B cell (primary cell): ENCODE measurements at regions of chr19 and their contacts with region 1.

Region 1: DNA sequence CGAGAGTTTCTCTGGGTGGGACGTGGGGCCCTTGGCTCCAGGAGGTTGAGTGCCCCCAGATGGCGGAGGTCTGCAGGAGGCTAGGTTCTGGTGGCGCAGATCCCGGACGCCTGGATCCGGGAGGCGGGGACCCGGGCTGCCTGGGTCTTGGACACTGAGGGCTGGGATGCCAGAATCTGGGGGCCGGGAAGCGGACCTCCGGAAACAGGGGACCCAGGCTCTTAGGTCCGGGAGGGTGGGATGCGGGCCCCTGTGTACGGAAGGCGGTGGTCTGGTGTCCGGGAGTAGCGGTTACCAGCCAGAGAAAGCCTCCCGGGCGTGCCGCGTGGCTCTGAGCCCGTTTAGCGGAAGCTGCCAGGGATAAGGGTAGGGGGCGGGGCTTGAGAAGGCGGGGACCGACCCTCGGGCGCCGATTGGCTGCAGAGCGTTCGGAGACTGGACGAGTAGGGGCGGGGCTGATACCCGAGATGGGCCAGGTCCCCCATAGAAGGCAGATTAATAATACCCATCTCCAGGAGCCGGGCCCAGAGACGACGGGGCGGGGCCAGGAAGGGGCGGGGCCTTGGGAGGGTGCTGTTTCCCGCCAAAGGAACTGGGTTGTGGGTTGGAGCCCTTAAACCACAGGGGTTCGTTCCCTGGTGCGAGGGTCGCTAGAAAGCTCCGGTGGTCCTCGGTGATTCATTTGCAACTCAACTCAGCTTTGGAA is at the start of gene SLC1A5:
- DNase-seq: peak; percentile 97
- ATAC-seq: peak; percentile 86
- H3K4me3 ChIP-seq: peak within 1 kb of the TSS; percentile 67 to 95 (median 79)
- H3K4me3 Mint-ChIP-seq: peak within 1 kb of the TSS; percentile 93
- H3K27ac ChIP-seq: peak within 1 kb of the TSS; percentile 40 to 47
- H3K27ac Mint-ChIP-seq: peak within 1 kb of the TSS; percentile 98
- H3K4me1 ChIP-seq: peaks cover 32 to 51% of the 10 kb centered on the region in 2 donors
- H3K4me1 Mint-ChIP-seq: peaks cover 52% of the 10 kb centered on the region
- H3K27me3 ChIP-seq: no peaks in the 10 kb centered on the region
- H3K27me3 Mint-ChIP-seq: no peaks in the 10 kb centered on the region
- CTCF ChIP-seq: no peak
- total RNA-seq, gene SLC1A5: 35.2 and 37.3 TPM in 2 replicates

Region 2: DNA sequence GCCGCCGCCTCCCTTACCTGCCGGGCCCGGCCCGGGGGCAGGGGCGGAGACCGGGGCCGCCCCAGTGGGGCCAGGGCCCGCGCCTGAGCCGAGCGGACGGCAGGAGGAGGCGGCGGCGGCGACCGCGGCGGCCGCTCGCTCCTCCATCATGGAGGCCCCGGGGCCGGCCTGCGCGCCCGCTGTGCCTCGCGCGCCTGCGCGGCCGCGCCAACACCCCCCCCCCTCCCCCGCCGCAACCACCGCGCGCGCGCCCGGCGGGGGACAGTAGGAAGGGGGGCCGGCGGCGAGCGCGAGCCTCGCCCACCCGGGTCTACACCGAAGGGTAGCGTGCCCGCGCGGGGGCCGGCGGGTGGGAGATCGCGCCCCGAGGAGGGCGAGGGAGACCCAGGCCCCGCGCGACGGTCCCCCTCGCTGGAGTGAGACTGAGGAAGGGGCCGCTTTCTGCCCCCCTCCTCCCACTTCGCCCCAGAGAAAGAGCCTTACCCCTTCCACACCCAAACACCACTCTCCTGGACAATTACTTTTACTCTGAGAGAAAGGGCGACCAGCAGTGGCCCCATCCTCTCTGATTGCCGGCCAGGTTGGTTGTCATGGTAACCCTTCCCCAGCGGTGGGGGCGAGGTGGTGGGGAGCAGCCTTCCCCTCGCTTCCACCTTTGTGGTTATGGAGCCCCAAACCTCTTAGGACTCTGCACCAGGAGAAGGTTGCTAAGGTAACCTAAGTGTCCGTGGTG is 42.0 kb before region 1 on chr19 and contains the start of gene STRN4:
- CTCF ChIA-PET with region 1: interaction called, 4 read pairs
- POLR2A ChIA-PET with region 1: no interaction called
- intact Hi-C with region 1: loop called (anchors 5 kb)
- DNase-seq: peak; percentile 82
- ATAC-seq: peak; percentile 78
- H3K4me3 ChIP-seq: peak within 1 kb of the TSS; percentile 51 to 87 (median 84)
- H3K4me3 Mint-ChIP-seq: peak within 1 kb of the TSS; percentile 93
- H3K27ac ChIP-seq: peak within 1 kb of the TSS; percentile 43 to 77
- H3K27ac Mint-ChIP-seq: peak within 1 kb of the TSS; percentile 85
- H3K4me1 ChIP-seq: peaks cover 15 to 43% of the 10 kb centered on the region in 2 donors
- H3K4me1 Mint-ChIP-seq: peaks cover 58% of the 10 kb centered on the region
- H3K27me3 ChIP-seq: no peaks in the 10 kb centered on the region
- H3K27me3 Mint-ChIP-seq: no peaks in the 10 kb centered on the region
- CTCF ChIP-seq: no peak
- total RNA-seq, gene STRN4: 102 and 112 TPM in 2 replicates

Region 3: DNA sequence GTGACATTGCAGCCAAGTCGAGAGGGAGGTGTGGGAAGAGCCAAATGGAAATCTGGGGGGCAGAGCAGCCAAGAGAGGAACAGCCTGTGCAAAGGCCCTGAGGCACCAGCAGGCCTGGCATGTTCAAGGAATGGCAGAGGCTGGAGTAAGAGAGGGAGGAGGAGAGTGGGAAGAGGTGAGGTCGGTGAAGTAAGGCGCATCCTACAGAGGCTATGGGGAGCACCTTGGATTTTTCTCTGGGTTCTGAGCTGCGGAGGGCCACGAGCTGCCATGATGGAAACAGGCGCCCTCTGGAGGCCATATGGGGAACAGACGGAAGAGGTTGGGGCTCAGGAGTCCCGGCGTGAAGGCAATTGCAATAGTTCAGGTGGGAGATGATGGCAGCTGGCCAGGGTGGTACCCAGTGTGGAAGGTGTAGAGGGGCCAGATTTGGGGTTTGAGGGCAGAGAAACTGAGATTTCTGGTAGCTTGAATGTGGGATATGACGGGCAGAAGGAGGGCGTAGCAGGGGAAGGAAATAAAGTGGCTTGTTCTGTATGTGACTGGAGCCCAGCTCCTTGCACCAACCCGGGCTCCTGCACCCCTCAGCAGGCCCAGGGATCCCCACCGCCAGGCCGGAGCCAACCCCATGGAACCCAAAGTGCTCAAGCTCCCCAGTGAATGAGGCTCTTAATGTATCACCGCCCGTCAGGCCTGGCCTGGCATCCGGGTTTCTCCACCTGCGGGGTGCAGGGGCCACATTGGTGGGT is 21.7 kb before region 1 on chr19:
- CTCF ChIA-PET with region 1: interaction called, 10 read pairs
- POLR2A ChIA-PET with region 1: interaction called, 12 read pairs
- intact Hi-C with region 1: no loop called
- DNase-seq: peak; percentile 67
- ATAC-seq: peak; percentile 64
- H3K4me3 ChIP-seq: no peak overlapping the region
- H3K4me3 Mint-ChIP-seq: no peak overlapping the region
- H3K27ac ChIP-seq: no peak overlapping the region
- H3K27ac Mint-ChIP-seq: no peak overlapping the region
- H3K4me1 ChIP-seq: no peaks in the 10 kb centered on the region
- H3K4me1 Mint-ChIP-seq: peaks cover 2% of the 10 kb centered on the region
- H3K27me3 ChIP-seq: no peaks in the 10 kb centered on the region
- H3K27me3 Mint-ChIP-seq: no peaks in the 10 kb centered on the region
- CTCF ChIP-seq: peak; percentile 72

Region 4: DNA sequence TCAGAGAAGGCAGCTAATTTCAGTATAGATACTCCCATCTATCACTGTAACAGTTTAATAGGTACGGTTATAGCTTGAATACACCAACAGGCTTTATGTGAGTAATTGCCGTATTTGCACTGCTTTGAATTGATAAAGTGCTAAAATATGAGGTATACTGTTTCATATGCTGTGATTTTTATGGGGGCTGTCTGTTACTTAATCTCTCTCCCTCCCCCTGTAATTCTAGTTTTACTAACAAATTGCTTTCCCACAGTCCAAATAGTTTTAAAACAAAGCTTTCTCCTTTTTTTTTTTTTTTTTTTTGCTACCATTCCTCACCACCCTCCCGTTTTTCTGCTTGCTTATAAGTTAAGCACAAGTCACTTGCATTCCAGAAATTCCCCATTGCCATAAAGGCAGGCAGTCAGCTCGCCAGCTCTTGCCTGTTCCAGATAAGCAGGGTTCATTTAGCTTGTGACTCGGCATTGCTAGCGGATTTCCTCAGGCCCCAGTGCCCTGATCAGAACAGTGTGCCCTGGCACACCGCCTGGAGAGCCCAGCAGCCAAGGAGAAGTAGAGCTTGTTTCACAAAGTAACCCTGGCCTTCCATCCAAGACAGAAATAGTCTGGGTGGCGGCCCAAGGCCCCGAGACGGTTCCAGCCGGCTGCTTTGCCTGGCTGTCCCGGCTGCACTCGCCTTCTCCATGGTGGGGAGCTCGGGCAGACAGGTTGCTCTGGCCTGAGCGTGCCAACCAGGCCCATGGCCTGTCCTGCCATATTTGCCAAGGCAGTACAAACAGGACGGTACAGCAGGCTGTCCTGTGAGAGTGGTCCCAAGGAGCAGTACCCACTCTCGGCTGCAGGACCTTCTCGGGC is 187.7 kb after region 1 on chr19:
- CTCF ChIA-PET with region 1: no interaction called
- POLR2A ChIA-PET with region 1: no interaction called
- intact Hi-C with region 1: no loop called
- DNase-seq: no peak
- ATAC-seq: no peak
- H3K4me3 ChIP-seq: no peak overlapping the region
- H3K4me3 Mint-ChIP-seq: no peak overlapping the region
- H3K27ac ChIP-seq: no peak overlapping the region
- H3K27ac Mint-ChIP-seq: no peak overlapping the region
- H3K4me1 ChIP-seq: peaks cover 7 to 8% of the 10 kb centered on the region in 2 donors
- H3K4me1 Mint-ChIP-seq: peaks cover 21% of the 10 kb centered on the region
- H3K27me3 ChIP-seq: no peaks in the 10 kb centered on the region
- H3K27me3 Mint-ChIP-seq: no peaks in the 10 kb centered on the region
- CTCF ChIP-seq: no peak

Region 5: GRCh38 chr19:47225746-47226425 is 437.5 kb after region 1 on chr19:
- CTCF ChIA-PET with region 1: no interaction called
- POLR2A ChIA-PET with region 1: no interaction called
- intact Hi-C with region 1: loop called (anchors 5 kb)
- DNase-seq: peak; percentile 93
- ATAC-seq: peak; percentile 62
- H3K4me3 ChIP-seq: peak overlapping the region in 4 of 5 experiments; percentile 42 to 95 (median 56)
- H3K4me3 Mint-ChIP-seq: peak overlapping the region; percentile 90
- H3K27ac ChIP-seq: peak overlapping the region; percentile 82 to 93
- H3K27ac Mint-ChIP-seq: peak overlapping the region; percentile 95
- H3K4me1 ChIP-seq: peaks cover 41 to 46% of the 10 kb centered on the region in 2 donors
- H3K4me1 Mint-ChIP-seq: peaks cover 15% of the 10 kb centered on the region
- H3K27me3 ChIP-seq: peaks cover 0 to 31% (median 1%) of the 10 kb centered on the region in 4 experiments
- H3K27me3 Mint-ChIP-seq: no peaks in the 10 kb centered on the region
- CTCF ChIP-seq: peak; percentile 50